Activated naive CD4-positive, alpha-beta T cell treated with anti-CD3 and anti-CD28 coated beads, Interleukin-2, amount 10 ng/mL, durations not matched to agents 7 days and 5 days (primary cell): ENCODE measurements at regions of chr7 and their contacts with region 1.

Region 1: GRCh38 chr7:76020031-76020714 is 25.8 kb upstream of the TMEM120A start:
- DNase-seq: peak; percentile 82
- H3K4me3 Mint-ChIP-seq: no peak overlapping the region
- H3K27ac Mint-ChIP-seq: no peak overlapping the region
- H3K4me1 Mint-ChIP-seq: peaks cover 18% of the 10 kb centered on the region
- H3K27me3 Mint-ChIP-seq: no peaks in the 10 kb centered on the region

Region 2: DNA sequence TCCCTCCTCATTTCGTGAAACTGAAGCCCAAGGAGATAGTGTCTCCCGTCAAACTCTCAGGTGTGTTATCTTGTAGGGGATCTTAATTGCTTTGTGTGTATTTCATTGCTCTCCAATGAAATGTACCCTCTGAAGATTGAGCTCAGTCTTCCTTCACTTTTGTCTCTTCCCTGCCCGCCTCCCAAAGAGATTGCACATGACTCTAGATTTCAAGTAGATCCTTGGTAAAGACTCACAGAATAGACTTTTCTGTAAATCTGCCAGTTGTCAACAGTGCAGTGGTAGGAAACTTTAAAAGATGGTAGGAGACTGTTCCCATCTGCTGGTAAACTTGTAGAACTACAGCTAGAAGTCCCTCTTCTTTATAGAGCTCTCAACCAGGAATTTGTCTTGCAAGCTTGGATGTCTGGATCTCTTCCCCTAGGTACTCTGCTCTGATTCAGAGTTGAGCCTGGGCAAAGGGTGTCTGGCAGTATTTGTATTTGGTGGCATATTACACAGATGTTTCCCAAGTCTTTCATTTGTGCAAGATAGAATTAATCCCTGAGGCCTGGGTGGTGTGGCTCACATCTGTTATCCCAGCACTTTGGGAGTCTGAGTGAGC is 257.8 kb before region 1 on chr7:
- CTCF ChIA-PET with region 1: interaction called, 15 read pairs
- DNase-seq: no peak
- H3K4me3 Mint-ChIP-seq: no peak overlapping the region
- H3K27ac Mint-ChIP-seq: no peak overlapping the region
- H3K4me1 Mint-ChIP-seq: no peaks in the 10 kb centered on the region
- H3K27me3 Mint-ChIP-seq: peaks cover 7% of the 10 kb centered on the region

Region 3: DNA sequence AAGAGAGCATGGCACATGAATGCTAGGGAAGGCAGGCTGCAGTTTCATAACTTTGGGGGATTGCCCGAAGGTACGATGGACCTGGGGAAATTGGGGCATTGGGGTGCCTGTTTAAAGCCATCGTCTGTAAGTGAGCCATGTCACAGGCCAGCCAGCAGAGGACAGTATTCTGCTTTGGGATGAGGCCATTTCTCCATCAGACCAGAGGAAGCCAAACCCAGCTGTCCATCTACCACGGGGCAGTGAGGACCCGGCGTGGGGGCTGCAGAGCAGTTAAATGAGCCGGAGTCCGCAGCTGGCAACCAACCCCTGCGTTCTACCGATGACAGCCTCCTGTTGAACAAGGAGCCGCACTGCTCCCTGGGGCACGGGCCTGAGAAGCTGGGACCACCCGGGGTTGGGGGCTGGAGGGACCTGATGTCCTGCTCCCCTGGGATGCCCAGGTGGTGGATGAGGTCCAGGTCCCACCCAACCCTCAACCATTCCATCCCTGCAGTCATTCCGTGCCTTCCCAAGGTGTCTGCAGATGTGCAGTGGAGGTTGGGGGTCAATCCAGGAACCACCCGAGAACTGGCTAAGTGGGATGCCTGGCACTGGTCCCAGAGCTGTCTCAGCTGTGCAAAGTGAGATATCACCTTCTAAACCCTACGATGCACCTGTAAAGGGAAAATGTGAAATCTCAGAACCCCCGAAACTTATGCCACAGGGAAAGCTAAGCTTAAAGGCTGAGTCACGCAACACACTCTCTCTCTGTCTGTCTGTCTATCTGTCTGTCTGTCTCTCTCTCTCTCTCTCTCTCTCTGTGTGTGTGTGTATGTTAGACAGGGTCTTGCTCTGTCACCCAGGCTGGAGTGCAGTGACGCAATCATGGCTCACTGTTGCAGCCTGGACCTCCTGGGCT is 153.4 kb before region 1 on chr7:
- CTCF ChIA-PET with region 1: interaction called, 81 read pairs
- DNase-seq: peak; percentile 63
- H3K4me3 Mint-ChIP-seq: no peak overlapping the region
- H3K27ac Mint-ChIP-seq: no peak overlapping the region
- H3K4me1 Mint-ChIP-seq: peaks cover 5% of the 10 kb centered on the region
- H3K27me3 Mint-ChIP-seq: peaks cover 25% of the 10 kb centered on the region

Region 4: GRCh38 chr7:76037310-76037709 is 17.1 kb after region 1 on chr7:
- CTCF ChIA-PET with region 1: interaction called, 15 read pairs
- DNase-seq: no peak
- H3K4me3 Mint-ChIP-seq: no peak overlapping the region
- H3K27ac Mint-ChIP-seq: no peak overlapping the region
- H3K4me1 Mint-ChIP-seq: peaks cover 7% of the 10 kb centered on the region
- H3K27me3 Mint-ChIP-seq: no peaks in the 10 kb centered on the region